B cell (primary cell): ENCODE measurements at regions of chrX and their contacts with region 1.

Region 1: DNA sequence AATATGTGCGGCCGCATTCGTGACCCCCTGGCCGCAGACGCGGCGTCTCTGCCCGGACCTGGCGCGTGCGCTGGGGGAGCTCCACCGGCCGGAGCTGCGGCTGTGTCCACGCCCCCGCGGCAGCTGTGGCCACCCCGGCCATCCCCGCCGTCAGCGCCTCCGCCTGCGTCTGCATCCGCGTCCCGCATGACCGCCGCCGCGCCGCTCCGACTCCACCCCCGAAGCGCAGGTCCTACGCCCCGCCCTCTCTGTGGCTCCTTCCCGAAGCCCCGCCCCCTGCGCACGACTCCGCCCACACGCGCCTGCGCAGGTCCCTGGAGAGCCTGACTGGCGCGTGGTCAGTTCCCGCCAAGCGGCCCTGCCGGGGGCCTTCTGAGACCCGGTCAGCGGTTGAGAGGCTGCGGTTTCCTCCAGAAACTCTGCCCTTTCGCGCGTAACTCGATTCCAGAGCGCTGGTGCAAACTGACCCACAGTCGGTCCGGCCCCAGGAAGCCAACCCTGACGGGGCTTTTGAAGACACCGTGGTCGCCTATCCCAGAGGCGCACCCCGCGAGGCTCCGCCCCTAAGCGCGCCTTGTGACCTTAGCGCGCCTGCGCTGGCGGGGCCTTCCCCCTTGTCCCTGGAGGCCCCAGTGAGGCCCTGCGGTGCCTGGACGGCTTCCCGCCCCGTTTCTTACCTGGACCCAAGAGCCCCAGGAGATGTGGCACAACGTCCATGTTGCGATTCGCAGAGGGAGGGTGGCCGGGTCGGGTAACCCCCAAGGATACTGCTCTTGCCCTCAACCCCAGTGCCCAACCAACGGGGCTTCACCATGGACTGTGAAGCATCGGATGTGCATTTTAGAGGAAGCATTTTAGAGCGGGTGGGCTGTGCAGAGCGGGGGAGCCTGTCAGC is at the start of gene LAGE3:
- DNase-seq: peak; percentile 94
- ATAC-seq: peak; percentile 88
- H3K4me3 ChIP-seq: peak within 1 kb of the TSS in 4 of 5 experiments; percentile 51 to 59 (median 54)
- H3K4me3 Mint-ChIP-seq: peak within 1 kb of the TSS; percentile 88
- H3K27ac ChIP-seq: peak within 1 kb of the TSS; percentile 75 to 84
- H3K27ac Mint-ChIP-seq: peak within 1 kb of the TSS; percentile 94
- H3K4me1 ChIP-seq: peaks cover 5 to 16% of the 10 kb centered on the region in 2 donors
- H3K4me1 Mint-ChIP-seq: peaks cover 19% of the 10 kb centered on the region
- H3K27me3 ChIP-seq: no peaks in the 10 kb centered on the region
- H3K27me3 Mint-ChIP-seq: no peaks in the 10 kb centered on the region
- CTCF ChIP-seq: no peak
- total RNA-seq, gene LAGE3: 17.0 and 19.3 TPM in 2 replicates

Region 2: GRCh38 chrX:154443992-154444754 is 34.8 kb before region 1 on chrX and contains the start of gene FAM50A:
- CTCF ChIA-PET with region 1: no interaction called
- POLR2A ChIA-PET with region 1: no interaction called
- intact Hi-C with region 1: loop called (anchors 5 kb)
- DNase-seq: peak; percentile 86
- ATAC-seq: peak; percentile 90
- H3K4me3 ChIP-seq: peak within 1 kb of the TSS in 4 of 5 experiments; percentile 49 to 58 (median 53)
- H3K4me3 Mint-ChIP-seq: peak within 1 kb of the TSS; percentile 83
- H3K27ac ChIP-seq: peak within 1 kb of the TSS; percentile 69 to 81
- H3K27ac Mint-ChIP-seq: peak within 1 kb of the TSS; percentile 37
- H3K4me1 ChIP-seq: peaks cover 10 to 18% of the 10 kb centered on the region in 2 donors
- H3K4me1 Mint-ChIP-seq: peaks cover 5% of the 10 kb centered on the region
- H3K27me3 ChIP-seq: no peaks in the 10 kb centered on the region
- H3K27me3 Mint-ChIP-seq: no peaks in the 10 kb centered on the region
- CTCF ChIP-seq: no peak
- total RNA-seq, gene FAM50A: 70.4 and 79.8 TPM in 2 replicates

Region 3: DNA sequence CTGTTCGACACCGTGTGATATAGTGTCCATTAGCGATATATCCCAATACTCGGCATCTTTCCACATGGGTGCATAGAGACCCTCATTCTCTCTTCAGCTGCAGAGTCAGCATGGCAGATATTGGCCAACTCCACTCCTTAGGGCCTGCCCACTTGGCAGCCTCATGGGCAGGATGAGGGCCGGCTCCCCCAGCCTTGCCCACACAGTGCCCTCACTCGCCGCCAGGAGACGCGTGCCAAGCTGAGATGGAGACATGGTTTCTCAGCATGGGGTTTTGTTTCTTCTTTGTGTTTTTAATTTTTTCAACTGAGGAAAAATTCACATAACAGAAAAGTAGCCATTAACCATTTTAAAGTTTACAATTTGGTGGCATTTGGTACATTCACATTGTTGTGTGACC is 26.2 kb before region 1 on chrX:
- CTCF ChIA-PET with region 1: interaction called, 3 read pairs
- POLR2A ChIA-PET with region 1: interaction called, 17 read pairs
- intact Hi-C with region 1: no loop called
- DNase-seq: no peak
- ATAC-seq: no peak
- H3K4me3 ChIP-seq: no peak overlapping the region
- H3K4me3 Mint-ChIP-seq: no peak overlapping the region
- H3K27ac ChIP-seq: no peak overlapping the region
- H3K27ac Mint-ChIP-seq: no peak overlapping the region
- H3K4me1 ChIP-seq: peaks cover 0 to 6% of the 10 kb centered on the region in 2 donors
- H3K4me1 Mint-ChIP-seq: peaks cover 3% of the 10 kb centered on the region
- H3K27me3 ChIP-seq: no peaks in the 10 kb centered on the region
- H3K27me3 Mint-ChIP-seq: no peaks in the 10 kb centered on the region
- CTCF ChIP-seq: no peak

Region 4: GRCh38 chrX:154515878-154516655 is 37.1 kb after region 1 on chrX and contains the start of gene FAM3A:
- CTCF ChIA-PET with region 1: no interaction called
- POLR2A ChIA-PET with region 1: no interaction called
- intact Hi-C with region 1: loop called (anchors 1 kb)
- DNase-seq: peak; percentile 89
- ATAC-seq: peak; percentile 97
- H3K4me3 ChIP-seq: peak within 1 kb of the TSS; percentile 36 to 75 (median 67)
- H3K4me3 Mint-ChIP-seq: peak within 1 kb of the TSS; percentile 89
- H3K27ac ChIP-seq: peak within 1 kb of the TSS; percentile 71 to 73
- H3K27ac Mint-ChIP-seq: peak within 1 kb of the TSS; percentile 94
- H3K4me1 ChIP-seq: peaks cover 4 to 22% of the 10 kb centered on the region in 2 donors
- H3K4me1 Mint-ChIP-seq: peaks cover 18% of the 10 kb centered on the region
- H3K27me3 ChIP-seq: no peaks in the 10 kb centered on the region
- H3K27me3 Mint-ChIP-seq: no peaks in the 10 kb centered on the region
- CTCF ChIP-seq: no peak
- total RNA-seq, gene FAM3A: 39.6 and 43.3 TPM in 2 replicates